ENCODE measurements at regions of chr12 and their contacts with region 1.

Region 1: DNA sequence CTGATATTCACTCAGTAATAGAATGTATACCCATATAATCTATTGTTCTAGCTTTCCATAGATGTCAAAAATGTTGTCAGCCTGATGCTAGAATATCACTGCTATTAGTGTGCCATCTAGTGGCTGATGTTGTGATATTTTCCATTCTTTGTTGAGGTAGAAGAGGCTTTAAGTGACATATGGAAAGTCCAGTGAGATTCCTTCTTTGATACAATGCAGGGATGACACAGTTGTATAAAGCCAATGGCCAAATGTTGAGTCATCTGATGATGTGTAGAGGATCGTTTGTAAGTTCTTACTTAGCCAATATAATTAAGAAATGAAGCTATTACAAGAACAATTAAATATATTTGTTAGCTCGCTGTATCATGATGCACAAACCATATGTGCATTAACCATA is 58.1 kb upstream of the PCED1B start:
- DNase-seq: peak; percentile 90
- ATAC-seq: peak; percentile 98
- H3K4me3 ChIP-seq: no peak overlapping the region
- H3K27ac ChIP-seq: no peak overlapping the region
- H3K4me1 ChIP-seq: peaks cover 0 to 17% of the 10 kb centered on the region in 2 experiments; a peak in 3 of 4 replicates
- H3K27me3 ChIP-seq: no peaks in the 10 kb centered on the region
- CTCF ChIP-seq: peak; percentile 52 to 81 (median 72); a peak in 5 of 6 replicates
- POLR2A ChIP-seq: no peak
- RAD21 ChIP-seq: peak; percentile 91

Region 2: DNA sequence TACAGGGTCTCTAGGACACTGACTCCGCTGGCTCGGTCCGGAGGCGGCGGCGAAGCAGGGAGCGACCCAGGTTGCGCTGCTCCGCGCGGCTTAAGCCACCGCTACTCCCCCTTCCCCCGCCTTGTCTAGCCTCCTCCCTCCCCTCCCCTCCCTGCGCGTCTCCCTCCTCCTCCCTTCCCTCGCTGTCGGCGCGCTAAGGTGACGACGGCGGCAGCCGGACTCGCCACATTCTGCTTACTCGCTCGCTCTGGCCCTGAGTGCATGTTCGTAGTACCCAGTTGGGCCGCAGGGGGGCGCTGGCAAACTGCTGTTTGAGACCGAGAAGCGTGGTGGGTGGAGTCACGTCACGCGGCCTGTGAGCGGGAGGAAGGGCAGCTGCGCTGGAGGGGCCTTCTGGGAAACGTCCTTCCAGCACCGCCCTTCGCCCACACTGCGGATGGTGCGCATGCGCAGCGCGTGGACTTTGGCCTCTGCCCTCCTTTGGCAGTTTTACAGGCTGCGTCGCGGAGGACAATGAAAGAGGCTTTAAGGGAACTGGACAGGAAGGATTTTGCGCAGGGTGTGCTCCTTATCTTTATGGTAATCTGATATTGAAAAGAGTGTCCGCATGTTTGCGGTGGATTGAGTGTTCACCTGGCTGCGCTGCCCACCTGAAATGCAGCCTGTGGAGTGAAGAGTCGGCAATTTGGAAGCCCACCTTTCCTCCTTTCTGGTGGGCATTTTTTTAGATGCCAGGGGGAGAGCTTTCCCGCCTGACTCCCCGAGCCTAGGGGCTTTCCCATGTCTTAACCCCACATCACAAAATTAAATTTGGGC is 1030.6 kb before region 1 on chr12 and contains the start of gene SCAF11:
- CTCF ChIA-PET with region 1: no interaction called
- POLR2A ChIA-PET with region 1: no interaction called
- RAD21 ChIA-PET with region 1: no interaction called
- intact Hi-C with region 1: loop called (anchors 5 kb)
- DNase-seq: peak; percentile 100
- ATAC-seq: peak; percentile 84
- H3K4me3 ChIP-seq: peak within 1 kb of the TSS; percentile 85 to 89
- H3K27ac ChIP-seq: peak within 1 kb of the TSS; percentile 98
- H3K4me1 ChIP-seq: peaks cover 13 to 22% of the 10 kb centered on the region in 2 experiments
- H3K27me3 ChIP-seq: no peaks in the 10 kb centered on the region
- CTCF ChIP-seq: peak; percentile 81 to 92 (median 91); a peak in 5 of 6 replicates
- POLR2A ChIP-seq: peak; percentile 74
- RAD21 ChIP-seq: peak; percentile 98
- total RNA-seq, gene SCAF11: 79.8 TPM

Region 3: DNA sequence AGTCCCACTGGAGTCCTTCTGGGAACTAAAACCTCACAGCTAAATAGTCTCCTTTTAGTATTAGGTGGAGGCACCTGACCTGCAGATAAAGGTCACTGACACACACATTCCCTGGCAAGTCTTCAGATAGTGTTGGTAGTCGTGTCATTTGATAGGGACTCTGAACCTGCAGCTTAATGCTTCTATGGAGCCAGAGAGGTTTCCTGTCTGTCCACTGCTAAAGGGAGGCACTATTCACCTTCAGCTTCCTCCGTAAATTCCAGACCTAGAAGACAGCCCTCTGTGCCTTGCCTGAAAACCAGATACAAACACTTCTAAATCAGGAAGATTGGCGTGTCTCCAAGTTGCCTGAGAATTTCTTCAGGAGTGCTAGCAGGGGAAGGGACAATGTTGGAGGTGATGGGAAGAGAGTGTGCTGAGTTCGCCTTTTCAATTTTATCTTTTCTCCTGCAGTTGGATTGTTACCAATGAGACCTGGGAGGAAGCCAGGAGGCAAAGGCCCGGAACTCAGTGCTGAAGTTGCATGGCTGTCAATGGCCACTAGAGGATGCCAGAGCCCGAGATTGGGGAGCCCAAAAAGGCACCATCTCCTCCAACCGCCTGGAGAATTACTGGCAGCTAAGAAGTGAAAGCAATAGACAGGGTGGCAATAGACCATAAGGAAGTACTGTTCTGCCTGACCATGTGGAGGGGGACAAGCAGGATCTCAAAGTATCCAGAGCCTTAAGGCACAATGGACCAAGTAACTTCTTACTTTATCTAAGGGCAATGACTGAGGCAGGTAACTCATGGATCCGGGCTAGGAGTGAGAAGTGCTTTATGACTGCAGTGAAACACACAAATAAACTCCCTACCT is 949.3 kb before region 1 on chr12:
- CTCF ChIA-PET with region 1: interaction called, 4 read pairs
- POLR2A ChIA-PET with region 1: no interaction called
- RAD21 ChIA-PET with region 1: no interaction called
- intact Hi-C with region 1: loop called (anchors 1 kb)
- DNase-seq: peak; percentile 58
- ATAC-seq: peak; percentile 93
- H3K4me3 ChIP-seq: no peak overlapping the region
- H3K27ac ChIP-seq: peak overlapping the region; percentile 9; the same call in 1 of the 2 replicates
- H3K4me1 ChIP-seq: peaks cover 0 to 12% of the 10 kb centered on the region in 2 experiments; a peak in 3 of 4 replicates
- H3K27me3 ChIP-seq: no peaks in the 10 kb centered on the region
- CTCF ChIP-seq: peak; percentile 77 to 99 (median 98)
- POLR2A ChIP-seq: no peak
- RAD21 ChIP-seq: peak; percentile 91

Region 4: GRCh38 chr12:46124848-46125619 is 896.3 kb before region 1 on chr12:
- CTCF ChIA-PET with region 1: interaction called, 37 read pairs
- POLR2A ChIA-PET with region 1: no interaction called
- RAD21 ChIA-PET with region 1: interaction called in 1 of 2 experiments, 9 read pairs
- intact Hi-C with region 1: no loop called
- DNase-seq: peak; percentile 80
- ATAC-seq: peak; percentile 97
- H3K4me3 ChIP-seq: peak overlapping the region; percentile 18 to 55
- H3K27ac ChIP-seq: no peak overlapping the region
- H3K4me1 ChIP-seq: peaks cover 0 to 10% of the 10 kb centered on the region in 2 experiments; a peak in 1 of 4 replicates
- H3K27me3 ChIP-seq: no peaks in the 10 kb centered on the region
- CTCF ChIP-seq: peak; percentile 68 to 87 (median 76); a peak in 5 of 6 replicates
- POLR2A ChIP-seq: no peak
- RAD21 ChIP-seq: peak; percentile 77

Region 5: DNA sequence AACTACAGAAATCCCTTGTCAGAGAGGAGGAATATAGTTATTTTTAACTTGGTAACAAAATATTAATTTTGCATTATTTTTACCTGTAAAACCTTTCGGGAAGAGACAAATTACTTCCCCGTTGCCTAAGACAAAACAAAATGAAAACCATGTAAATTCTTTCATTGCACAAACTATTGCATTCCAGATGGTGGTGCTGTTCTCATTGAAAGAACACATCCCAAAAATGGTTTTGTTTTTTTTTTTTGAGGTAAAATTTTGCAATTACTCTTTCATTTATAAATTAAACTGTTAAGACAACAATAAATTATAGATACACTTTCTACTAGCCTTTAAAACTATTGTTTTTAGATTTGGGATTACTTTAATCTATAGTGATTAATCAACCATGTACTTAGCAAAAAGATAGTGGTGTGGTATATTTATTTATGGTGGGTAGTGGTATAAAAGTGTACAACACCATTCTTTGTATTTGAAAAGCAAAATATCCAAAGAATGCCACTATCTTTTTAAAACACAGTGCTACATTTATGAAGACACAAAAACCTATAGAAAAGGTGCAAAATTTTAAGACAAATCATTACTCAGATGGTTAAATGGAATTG is 867.9 kb before region 1 on chr12:
- CTCF ChIA-PET with region 1: interaction called, 3 read pairs
- POLR2A ChIA-PET with region 1: no interaction called
- RAD21 ChIA-PET with region 1: no interaction called
- intact Hi-C with region 1: loop called (anchors 1 kb)
- DNase-seq: peak; percentile 18
- ATAC-seq: no peak
- H3K4me3 ChIP-seq: no peak overlapping the region
- H3K27ac ChIP-seq: no peak overlapping the region
- H3K4me1 ChIP-seq: peaks cover 2 to 6% of the 10 kb centered on the region in 2 experiments; a peak in 2 of 4 replicates
- H3K27me3 ChIP-seq: no peaks in the 10 kb centered on the region
- CTCF ChIP-seq: peak; percentile 46 to 70 (median 63)
- POLR2A ChIP-seq: no peak
- RAD21 ChIP-seq: peak; percentile 73

Region 6: GRCh38 chr12:46342562-46343033 is 678.7 kb before region 1 on chr12:
- CTCF ChIA-PET with region 1: interaction called, 4 read pairs
- POLR2A ChIA-PET with region 1: no interaction called
- RAD21 ChIA-PET with region 1: no interaction called
- intact Hi-C with region 1: loop called (anchors 1 kb)
- DNase-seq: peak; percentile 56
- ATAC-seq: peak; percentile 94
- H3K4me3 ChIP-seq: no peak overlapping the region
- H3K27ac ChIP-seq: no peak overlapping the region
- H3K4me1 ChIP-seq: peaks cover 3 to 11% of the 10 kb centered on the region in 2 experiments; a peak in 3 of 4 replicates
- H3K27me3 ChIP-seq: no peaks in the 10 kb centered on the region
- CTCF ChIP-seq: peak; percentile 61 to 82 (median 78); a peak in 5 of 6 replicates
- POLR2A ChIP-seq: no peak
- RAD21 ChIP-seq: peak; percentile 93

Region 7: GRCh38 chr12:46459861-46460545 is 561.3 kb before region 1 on chr12:
- CTCF ChIA-PET with region 1: no interaction called
- POLR2A ChIA-PET with region 1: no interaction called
- RAD21 ChIA-PET with region 1: no interaction called
- intact Hi-C with region 1: loop called (anchors 10 kb)
- DNase-seq: no peak
- ATAC-seq: no peak
- H3K4me3 ChIP-seq: no peak overlapping the region
- H3K27ac ChIP-seq: no peak overlapping the region
- H3K4me1 ChIP-seq: peaks cover 49 to 68% of the 10 kb centered on the region in 2 experiments
- H3K27me3 ChIP-seq: no peaks in the 10 kb centered on the region
- CTCF ChIP-seq: no peak
- POLR2A ChIP-seq: no peak
- RAD21 ChIP-seq: no peak

Region 8: DNA sequence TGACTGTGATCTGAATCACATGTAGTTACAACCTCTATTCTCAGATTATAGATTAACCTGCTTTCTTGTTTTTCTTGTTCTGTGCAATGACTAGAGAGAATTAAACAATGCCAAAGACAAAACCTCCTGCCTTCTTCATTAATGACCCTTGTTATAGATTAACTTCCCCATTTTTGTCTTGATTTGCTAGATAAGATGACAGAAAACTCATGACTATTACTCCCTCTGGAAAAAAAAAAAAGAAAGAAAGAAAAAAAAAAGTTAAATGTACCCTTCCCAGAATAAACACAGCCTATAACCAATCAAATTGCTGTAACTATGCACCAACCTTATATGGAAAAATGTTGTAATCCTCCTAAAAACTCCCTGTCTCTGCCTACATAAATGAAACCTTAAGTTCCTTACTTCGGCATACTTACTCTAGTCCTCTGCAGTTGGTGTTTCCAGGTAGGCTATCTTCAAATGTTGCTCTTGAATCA is 17.0 kb after region 1 on chr12:
- CTCF ChIA-PET with region 1: no interaction called
- POLR2A ChIA-PET with region 1: no interaction called
- RAD21 ChIA-PET with region 1: no interaction called
- intact Hi-C with region 1: no loop called
- DNase-seq: no peak
- ATAC-seq: no peak
- H3K4me3 ChIP-seq: no peak overlapping the region
- H3K27ac ChIP-seq: no peak overlapping the region
- H3K4me1 ChIP-seq: peaks cover 3 to 6% of the 10 kb centered on the region in 2 experiments; a peak in 3 of 4 replicates
- H3K27me3 ChIP-seq: no peaks in the 10 kb centered on the region
- CTCF ChIP-seq: no peak
- POLR2A ChIP-seq: no peak
- RAD21 ChIP-seq: no peak

Measured in HCT116 (cell line).